Activated T-helper 1 cell treated with anti-CD3 and anti-CD28 coated beads, Interleukin-12 subunit alpha, Interleukin-12 subunit beta, Interleukin-2, Interleukin-4 antibody, amounts not matched to agents 30 ng/mL and 10 ng/mL and 1 ng/mL, durations not matched to agents 14 hours and 24 hours and 36 hours (primary cell): ENCODE measurements at regions of chr5 and their contacts with region 1.

Region 1: DNA sequence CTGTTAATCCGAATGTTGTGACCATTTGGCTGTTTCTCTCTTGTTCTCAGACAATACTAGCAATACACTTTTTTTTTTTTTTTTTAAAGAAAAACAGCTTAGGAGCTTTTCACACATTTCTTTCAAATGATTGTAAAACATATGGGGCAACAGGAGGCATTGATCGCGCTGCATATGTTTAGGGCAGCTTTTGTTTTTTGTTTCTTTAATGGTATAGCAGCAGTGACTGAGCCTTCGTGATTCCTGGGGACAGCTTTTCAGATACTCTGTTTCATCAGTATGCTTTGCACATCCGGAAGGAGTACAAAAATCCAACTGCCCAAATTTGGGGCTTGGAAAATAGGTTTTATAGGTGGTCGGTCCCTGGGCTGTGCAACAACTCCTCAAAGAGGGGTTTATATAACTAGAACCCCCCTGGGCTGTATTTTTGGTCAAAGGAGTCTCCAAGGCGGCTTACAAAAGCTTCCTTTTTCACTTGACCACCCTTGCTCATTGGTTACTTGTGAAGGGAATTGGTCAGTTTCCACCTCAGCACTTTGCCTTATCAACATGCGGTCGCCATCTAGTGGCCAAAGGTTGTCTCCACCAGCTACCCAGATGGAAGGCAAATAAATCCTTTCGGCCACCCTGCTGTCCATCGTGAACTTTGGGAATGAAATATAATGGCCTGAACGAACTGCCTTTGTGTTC is 91.8 kb downstream of the PDE6A start:
- DNase-seq: peak; percentile 14
- H3K4me3 Mint-ChIP-seq: no peak overlapping the region
- H3K27ac Mint-ChIP-seq: no peak overlapping the region
- H3K4me1 Mint-ChIP-seq: no peaks in the 10 kb centered on the region
- H3K27me3 Mint-ChIP-seq: no peaks in the 10 kb centered on the region

Region 2: DNA sequence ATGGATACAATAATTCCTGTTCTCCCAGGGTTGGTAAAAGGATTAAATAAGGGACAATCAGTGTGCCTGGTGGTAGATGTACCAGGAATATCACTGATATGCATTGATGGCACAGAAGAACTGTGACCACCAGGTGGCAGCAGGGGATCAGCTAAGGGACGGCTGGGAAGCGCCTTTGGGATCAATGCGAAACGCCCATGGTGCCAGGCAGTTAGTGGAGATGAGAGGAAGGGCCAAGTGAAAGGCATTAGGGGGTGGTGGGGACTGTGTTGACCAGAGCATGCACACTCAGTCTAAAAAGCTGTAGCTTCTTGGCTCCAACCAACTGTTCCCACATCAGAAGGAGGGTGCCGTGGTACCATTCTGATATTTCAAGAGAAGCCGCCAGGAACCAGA is 215.9 kb before region 1 on chr5:
- intact Hi-C with region 1: loop called (anchors 1 kb)
- DNase-seq: no peak
- H3K4me3 Mint-ChIP-seq: no peak overlapping the region
- H3K27ac Mint-ChIP-seq: no peak overlapping the region
- H3K4me1 Mint-ChIP-seq: peaks cover 20% of the 10 kb centered on the region
- H3K27me3 Mint-ChIP-seq: peaks cover 2% of the 10 kb centered on the region

Region 3: GRCh38 chr5:149667084-149667828 is 185.5 kb before region 1 on chr5:
- intact Hi-C with region 1: loop called (anchors 1 kb)
- DNase-seq: no peak
- H3K4me3 Mint-ChIP-seq: no peak overlapping the region
- H3K27ac Mint-ChIP-seq: no peak overlapping the region
- H3K4me1 Mint-ChIP-seq: peaks cover 4% of the 10 kb centered on the region
- H3K27me3 Mint-ChIP-seq: peaks cover 6% of the 10 kb centered on the region

Region 4: DNA sequence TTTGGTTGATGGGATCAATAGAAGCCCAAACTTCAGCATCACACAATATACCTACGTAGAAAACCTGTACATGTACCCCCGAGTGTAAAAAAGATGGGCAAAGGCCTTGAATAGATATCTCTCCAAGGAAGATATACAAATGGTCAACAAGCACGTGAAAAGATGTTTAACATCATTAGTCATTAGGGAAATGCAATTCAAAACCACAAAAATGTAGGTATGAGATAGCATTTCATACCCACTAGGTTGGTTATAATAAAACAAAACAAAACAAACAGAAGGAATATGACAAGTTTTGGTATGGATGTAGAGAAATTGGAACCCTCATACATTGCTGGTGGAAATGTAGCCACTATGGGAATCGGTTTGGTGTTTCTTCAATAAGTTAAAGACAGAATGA is 155.8 kb before region 1 on chr5:
- intact Hi-C with region 1: no loop called
- DNase-seq: no peak
- H3K4me3 Mint-ChIP-seq: no peak overlapping the region
- H3K27ac Mint-ChIP-seq: no peak overlapping the region
- H3K4me1 Mint-ChIP-seq: no peaks in the 10 kb centered on the region
- H3K27me3 Mint-ChIP-seq: peaks cover 11% of the 10 kb centered on the region

Region 5: GRCh38 chr5:149834246-149834855 is 18.4 kb before region 1 on chr5:
- intact Hi-C with region 1: loop called (anchors 2 kb)
- DNase-seq: peak; percentile 50
- H3K4me3 Mint-ChIP-seq: no peak overlapping the region
- H3K27ac Mint-ChIP-seq: no peak overlapping the region
- H3K4me1 Mint-ChIP-seq: peaks cover 13% of the 10 kb centered on the region
- H3K27me3 Mint-ChIP-seq: no peaks in the 10 kb centered on the region